CD8-positive, alpha-beta T cell (primary cell): ENCODE measurements at regions of chr1 and their contacts with region 1.

Region 1: GRCh38 chr1:179954493-179955297 is at the start of gene CEP350:
- DNase-seq: peak; percentile 94 to 100 (median 97)
- ATAC-seq: peak; percentile 86
- H3K4me3 ChIP-seq: peak within 1 kb of the TSS; percentile 69 to 85
- H3K4me3 Mint-ChIP-seq: peak within 1 kb of the TSS; percentile 85
- H3K27ac ChIP-seq: peak within 1 kb of the TSS; percentile 77 to 88
- H3K27ac Mint-ChIP-seq: peak within 1 kb of the TSS; percentile 95
- H3K4me1 ChIP-seq: peaks cover 35% of the 10 kb centered on the region
- H3K4me1 Mint-ChIP-seq: peaks cover 59% of the 10 kb centered on the region
- H3K27me3 ChIP-seq: no peaks in the 10 kb centered on the region
- H3K27me3 Mint-ChIP-seq: no peaks in the 10 kb centered on the region
- CTCF ChIP-seq: no peak
- total RNA-seq, gene CEP350: 37.6 to 42.7 TPM

Region 2: GRCh38 chr1:178023181-178023618 is 1931.5 kb before region 1 on chr1:
- CTCF ChIA-PET with region 1: no interaction called
- POLR2A ChIA-PET with region 1: no interaction called
- intact Hi-C with region 1: no loop called
- DNase-seq: no peak
- ATAC-seq: no peak
- H3K4me3 ChIP-seq: no peak overlapping the region
- H3K4me3 Mint-ChIP-seq: no peak overlapping the region
- H3K27ac ChIP-seq: no peak overlapping the region
- H3K27ac Mint-ChIP-seq: no peak overlapping the region
- H3K4me1 ChIP-seq: no peaks in the 10 kb centered on the region
- H3K4me1 Mint-ChIP-seq: no peaks in the 10 kb centered on the region
- H3K27me3 ChIP-seq: no peaks in the 10 kb centered on the region
- H3K27me3 Mint-ChIP-seq: no peaks in the 10 kb centered on the region
- CTCF ChIP-seq: no peak

Region 3: DNA sequence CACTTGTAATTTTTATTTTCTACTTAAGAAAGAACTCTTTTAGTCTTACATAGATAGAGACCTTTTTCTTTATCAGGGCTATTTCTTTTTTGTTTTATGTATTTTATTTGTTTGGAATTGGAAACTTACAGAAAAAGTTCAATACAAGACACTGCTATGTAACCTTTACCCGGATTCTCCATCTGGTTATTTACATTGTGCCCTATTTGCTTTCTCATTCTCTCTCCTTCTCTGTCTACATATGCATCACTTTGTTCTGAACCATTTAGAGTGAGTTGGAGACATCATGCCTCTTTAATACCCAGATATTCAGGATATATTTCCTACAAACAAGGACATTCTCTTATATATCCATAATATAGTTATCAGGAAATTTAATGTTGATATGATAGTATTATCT is 570.7 kb before region 1 on chr1:
- CTCF ChIA-PET with region 1: no interaction called
- POLR2A ChIA-PET with region 1: no interaction called
- intact Hi-C with region 1: no loop called
- DNase-seq: no peak
- ATAC-seq: no peak
- H3K4me3 ChIP-seq: no peak overlapping the region
- H3K4me3 Mint-ChIP-seq: no peak overlapping the region
- H3K27ac ChIP-seq: no peak overlapping the region
- H3K27ac Mint-ChIP-seq: no peak overlapping the region
- H3K4me1 ChIP-seq: no peaks in the 10 kb centered on the region
- H3K4me1 Mint-ChIP-seq: no peaks in the 10 kb centered on the region
- H3K27me3 ChIP-seq: no peaks in the 10 kb centered on the region
- H3K27me3 Mint-ChIP-seq: no peaks in the 10 kb centered on the region
- CTCF ChIP-seq: no peak

Region 4: GRCh38 chr1:179882243-179883039 is 72.3 kb before region 1 on chr1 and contains the start of gene TOR1AIP1:
- CTCF ChIA-PET with region 1: no interaction called
- POLR2A ChIA-PET with region 1: interaction called, 71 read pairs
- intact Hi-C with region 1: loop called (anchors 1 kb)
- DNase-seq: peak; percentile 95 to 99 (median 97)
- ATAC-seq: peak; percentile 74
- H3K4me3 ChIP-seq: peak within 1 kb of the TSS; percentile 91 to 95
- H3K4me3 Mint-ChIP-seq: peak within 1 kb of the TSS; percentile 94
- H3K27ac ChIP-seq: peak within 1 kb of the TSS; percentile 98 to 99
- H3K27ac Mint-ChIP-seq: peak within 1 kb of the TSS; percentile 100
- H3K4me1 ChIP-seq: peaks cover 37% of the 10 kb centered on the region
- H3K4me1 Mint-ChIP-seq: peaks cover 59% of the 10 kb centered on the region
- H3K27me3 ChIP-seq: no peaks in the 10 kb centered on the region
- H3K27me3 Mint-ChIP-seq: no peaks in the 10 kb centered on the region
- CTCF ChIP-seq: peak; percentile 41
- total RNA-seq, gene TOR1AIP1: 108 to 110 TPM

Region 5: DNA sequence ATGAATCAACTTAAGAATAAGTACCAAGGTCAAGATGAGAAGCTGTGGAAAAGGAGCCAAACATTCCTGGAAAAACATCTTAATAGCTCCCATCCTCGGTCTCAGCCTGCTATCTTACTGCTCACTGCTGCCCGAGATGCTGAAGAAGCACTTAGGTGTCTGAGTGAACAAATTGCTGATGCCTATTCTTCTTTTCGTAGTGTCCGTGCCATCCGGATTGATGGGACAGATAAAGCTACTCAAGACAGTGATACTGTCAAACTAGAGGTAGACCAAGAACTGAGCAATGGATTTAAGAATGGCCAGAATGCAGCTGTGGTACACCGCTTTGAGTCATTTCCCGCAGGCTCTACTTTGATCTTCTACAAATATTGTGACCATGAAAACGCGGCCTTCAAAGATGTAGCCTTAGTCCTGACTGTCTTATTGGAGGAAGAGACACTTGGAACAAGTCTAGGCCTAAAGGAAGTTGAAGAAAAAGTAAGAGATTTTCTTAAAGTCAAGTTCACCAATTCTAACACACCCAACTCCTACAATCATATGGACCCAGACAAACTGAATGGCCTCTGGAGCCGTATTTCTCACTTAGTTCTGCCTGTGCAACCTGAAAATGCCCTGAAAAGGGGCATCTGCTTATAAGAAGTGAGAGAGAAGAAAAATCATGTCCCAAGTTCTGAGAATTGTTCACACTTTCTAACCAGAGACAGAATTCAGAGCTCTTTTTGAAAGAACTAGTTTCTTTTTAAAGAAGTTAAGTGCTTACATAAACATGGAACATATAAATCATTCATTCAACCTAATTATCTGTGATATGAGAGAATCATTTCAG is 36.9 kb before region 1 on chr1:
- CTCF ChIA-PET with region 1: no interaction called
- POLR2A ChIA-PET with region 1: interaction called, 3 read pairs
- intact Hi-C with region 1: loop called in 1 of 2 experiments (anchors 5 kb)
- DNase-seq: no peak
- ATAC-seq: no peak
- H3K4me3 ChIP-seq: no peak overlapping the region
- H3K4me3 Mint-ChIP-seq: no peak overlapping the region
- H3K27ac ChIP-seq: no peak overlapping the region
- H3K27ac Mint-ChIP-seq: no peak overlapping the region
- H3K4me1 ChIP-seq: no peaks in the 10 kb centered on the region
- H3K4me1 Mint-ChIP-seq: peaks cover 10% of the 10 kb centered on the region
- H3K27me3 ChIP-seq: no peaks in the 10 kb centered on the region
- H3K27me3 Mint-ChIP-seq: no peaks in the 10 kb centered on the region
- CTCF ChIP-seq: no peak

Region 6: GRCh38 chr1:180502360-180503273 is 547.9 kb after region 1 on chr1 and contains the start of gene ACBD6:
- CTCF ChIA-PET with region 1: no interaction called
- POLR2A ChIA-PET with region 1: interaction called, 7 read pairs
- intact Hi-C with region 1: loop called (anchors 2 to 10 kb)
- DNase-seq: peak; percentile 73 to 92 (median 84)
- ATAC-seq: peak; percentile 89
- H3K4me3 ChIP-seq: peak within 1 kb of the TSS; percentile 96 to 97
- H3K4me3 Mint-ChIP-seq: peak within 1 kb of the TSS; percentile 96
- H3K27ac ChIP-seq: peak within 1 kb of the TSS; percentile 75 to 76
- H3K27ac Mint-ChIP-seq: peak within 1 kb of the TSS; percentile 98
- H3K4me1 ChIP-seq: peaks cover 27% of the 10 kb centered on the region
- H3K4me1 Mint-ChIP-seq: peaks cover 47% of the 10 kb centered on the region
- H3K27me3 ChIP-seq: no peaks in the 10 kb centered on the region
- H3K27me3 Mint-ChIP-seq: no peaks in the 10 kb centered on the region
- CTCF ChIP-seq: no peak
- total RNA-seq, gene ACBD6: 23.4 to 24.6 TPM